Activated naive CD4-positive, alpha-beta T cell treated with anti-CD3 and anti-CD28 coated beads, Interleukin-2, amount 10 ng/mL, durations not matched to agents 7 days and 5 days (primary cell): ENCODE measurements at regions of chr17 and their contacts with region 1.

Region 1: GRCh38 chr17:50139950-50140871 is 10.3 kb upstream of the SAMD14 start:
- DNase-seq: peak; percentile 90
- H3K4me3 Mint-ChIP-seq: peak overlapping the region; percentile 70
- H3K27ac Mint-ChIP-seq: peak overlapping the region; percentile 93
- H3K4me1 Mint-ChIP-seq: peaks cover 74% of the 10 kb centered on the region
- H3K27me3 Mint-ChIP-seq: no peaks in the 10 kb centered on the region

Region 2: GRCh38 chr17:50129728-50130558 is 10.3 kb before region 1 on chr17 and contains the start of gene SAMD14:
- CTCF ChIA-PET with region 1: interaction called, 11 read pairs
- DNase-seq: peak; percentile 70
- H3K4me3 Mint-ChIP-seq: peak within 1 kb of the TSS; percentile 58
- H3K27ac Mint-ChIP-seq: peak within 1 kb of the TSS; percentile 33
- H3K4me1 Mint-ChIP-seq: peaks cover 37% of the 10 kb centered on the region
- H3K27me3 Mint-ChIP-seq: peaks cover 65% of the 10 kb centered on the region

Region 3: GRCh38 chr17:50151041-50151936 is 11.1 kb after region 1 on chr17:
- CTCF ChIA-PET with region 1: interaction called, 19 read pairs
- DNase-seq: peak; percentile 94
- H3K4me3 Mint-ChIP-seq: peak overlapping the region; percentile 87
- H3K27ac Mint-ChIP-seq: peak overlapping the region; percentile 94
- H3K4me1 Mint-ChIP-seq: peaks cover 53% of the 10 kb centered on the region
- H3K27me3 Mint-ChIP-seq: peaks cover 8% of the 10 kb centered on the region

Region 4: DNA sequence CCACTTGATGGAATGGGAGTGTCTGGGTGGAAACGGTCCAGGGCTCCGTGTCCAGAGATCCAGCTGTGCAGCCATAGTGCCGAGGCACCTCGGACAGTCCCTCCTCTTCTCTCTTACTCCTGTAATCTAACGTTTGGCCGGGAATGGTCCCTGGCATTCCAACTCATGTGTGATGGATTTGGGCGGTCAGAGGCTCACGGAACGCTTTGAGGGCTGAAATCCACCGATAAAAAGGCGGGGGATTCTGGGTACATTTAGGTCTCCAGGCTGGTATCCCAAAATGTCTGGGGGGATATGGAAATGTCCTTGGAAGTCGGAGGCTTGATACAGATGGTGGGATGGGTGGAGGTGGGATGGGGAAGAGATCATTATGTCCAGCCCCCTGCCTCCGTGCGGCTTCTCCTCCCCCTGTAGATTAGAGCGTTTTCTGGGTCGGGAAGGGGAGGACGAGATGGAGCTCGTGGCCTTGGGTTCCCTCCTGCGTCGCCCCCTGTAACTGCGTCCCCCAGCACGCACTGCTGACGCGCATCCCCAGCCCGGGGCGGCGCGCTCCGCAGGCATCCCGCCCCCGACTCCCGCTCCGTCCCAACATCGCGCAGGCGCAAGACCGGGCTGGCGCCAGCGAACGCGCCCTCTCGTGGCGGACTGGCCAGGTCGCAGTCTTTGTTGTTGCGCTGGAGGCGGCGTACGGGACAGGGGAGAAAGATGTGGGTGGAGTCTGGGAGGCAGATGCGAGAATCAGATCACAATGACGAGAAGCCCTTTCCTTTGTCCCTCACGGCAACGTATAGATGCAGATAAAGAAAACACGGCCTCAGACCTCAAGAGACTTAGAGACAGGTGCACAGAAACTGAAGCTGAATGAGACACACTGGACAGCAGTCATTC is 21.1 kb after region 1 on chr17:
- CTCF ChIA-PET with region 1: interaction called, 36 read pairs
- DNase-seq: peak; percentile 95
- H3K4me3 Mint-ChIP-seq: peak overlapping the region; percentile 67
- H3K27ac Mint-ChIP-seq: peak overlapping the region; percentile 83
- H3K4me1 Mint-ChIP-seq: peaks cover 48% of the 10 kb centered on the region
- H3K27me3 Mint-ChIP-seq: peaks cover 24% of the 10 kb centered on the region

Region 5: GRCh38 chr17:50169121-50169764 is 29.0 kb after region 1 on chr17:
- CTCF ChIA-PET with region 1: interaction called, 26 read pairs
- DNase-seq: peak; percentile 68
- H3K4me3 Mint-ChIP-seq: peak overlapping the region; percentile 17
- H3K27ac Mint-ChIP-seq: peak overlapping the region; percentile 6
- H3K4me1 Mint-ChIP-seq: peaks cover 16% of the 10 kb centered on the region
- H3K27me3 Mint-ChIP-seq: peaks cover 49% of the 10 kb centered on the region